K562 (cell line): ENCODE measurements at regions of chr3 and their contacts with region 1.

Region 1: GRCh38 chr3:45037734-45038455 is 11.8 kb downstream of the CLEC3B start:
- DNase-seq: peak; percentile 94 to 97 (median 95)
- ATAC-seq: peak; percentile 92
- H3K4me3 ChIP-seq: no peak overlapping the region
- H3K27ac ChIP-seq: no peak overlapping the region
- H3K4me1 ChIP-seq: peaks cover 9 to 19% of the 10 kb centered on the region in 2 experiments
- H3K27me3 ChIP-seq: peaks cover 3 to 14% of the 10 kb centered on the region in 2 experiments; a peak in 4 of 5 replicates
- CTCF ChIP-seq: peak; percentile 99
- EP300 ChIP-seq: no peak
- POLR2A ChIP-seq: no peak
- RAD21 ChIP-seq: peak; percentile 99 to 100

Region 2: DNA sequence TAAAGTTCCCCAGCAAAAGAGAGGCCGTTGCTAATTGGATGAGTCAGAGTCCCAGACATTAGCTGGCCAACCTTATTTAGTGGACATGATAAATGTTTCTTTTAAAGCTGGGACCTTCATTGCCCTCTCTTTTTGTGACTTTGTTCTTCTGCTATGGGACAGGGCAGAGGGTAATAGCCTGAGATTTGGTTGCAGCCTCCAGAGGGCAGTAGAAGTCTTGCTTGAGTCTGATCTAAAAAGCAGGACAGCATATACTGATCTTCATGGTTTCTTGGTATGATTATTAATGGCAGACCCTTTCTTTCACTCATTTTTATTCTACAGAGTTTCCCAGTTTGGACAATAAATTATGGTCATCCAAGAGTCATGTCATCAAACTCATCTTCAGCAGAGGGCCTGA is 508.0 kb before region 1 on chr3:
- CTCF ChIA-PET with region 1: no interaction called
- POLR2A ChIA-PET with region 1: interaction called, 3 read pairs
- in situ Hi-C with region 1: no loop called
- intact Hi-C with region 1: loop called (anchors 2 kb)
- DNase-seq: peak in 1 of 4 experiments; percentile 37
- ATAC-seq: peak; percentile 76
- H3K4me3 ChIP-seq: no peak overlapping the region
- H3K27ac ChIP-seq: no peak overlapping the region
- H3K4me1 ChIP-seq: peaks cover 0 to 3% of the 10 kb centered on the region in 2 experiments; a peak in 1 of 5 replicates
- H3K27me3 ChIP-seq: peaks cover 0 to 8% of the 10 kb centered on the region in 2 experiments; a peak in 2 of 5 replicates
- CTCF ChIP-seq: peak; percentile 33 to 48 (median 43); a peak in 4 of 6 replicates
- EP300 ChIP-seq: no peak
- POLR2A ChIP-seq: no peak
- RAD21 ChIP-seq: peak in 1 of 2 experiments; percentile 34; a peak in 2 of 4 replicates

Region 3: GRCh38 chr3:45210308-45211041 is 172.6 kb after region 1 on chr3:
- CTCF ChIA-PET with region 1: interaction called, 94 read pairs
- POLR2A ChIA-PET with region 1: interaction called, 24 read pairs
- in situ Hi-C with region 1: loop called (anchors 5 kb)
- intact Hi-C with region 1: loop called (anchors 1 kb)
- DNase-seq: peak; percentile 81 to 88 (median 84)
- ATAC-seq: peak; percentile 99
- H3K4me3 ChIP-seq: no peak overlapping the region
- H3K27ac ChIP-seq: no peak overlapping the region
- H3K4me1 ChIP-seq: peaks cover 4 to 11% of the 10 kb centered on the region in 2 experiments; a peak in 3 of 5 replicates
- H3K27me3 ChIP-seq: no peaks in the 10 kb centered on the region
- CTCF ChIP-seq: peak; percentile 96 to 97 (median 96)
- EP300 ChIP-seq: peak; percentile 26; the same call in 1 of the 2 replicates
- POLR2A ChIP-seq: no peak
- RAD21 ChIP-seq: peak; percentile 96 to 98

Region 4: GRCh38 chr3:45499529-45499928 is 461.6 kb after region 1 on chr3:
- CTCF ChIA-PET with region 1: interaction called, 53 read pairs
- POLR2A ChIA-PET with region 1: no interaction called
- in situ Hi-C with region 1: no loop called
- intact Hi-C with region 1: no loop called
- DNase-seq: peak in 1 of 4 experiments; percentile 20
- ATAC-seq: no peak
- H3K4me3 ChIP-seq: no peak overlapping the region
- H3K27ac ChIP-seq: no peak overlapping the region
- H3K4me1 ChIP-seq: no peaks in the 10 kb centered on the region
- H3K27me3 ChIP-seq: no peaks in the 10 kb centered on the region
- CTCF ChIP-seq: peak in 2 of 3 experiments; percentile 20 to 70; a peak in 4 of 6 replicates
- EP300 ChIP-seq: no peak
- POLR2A ChIP-seq: no peak
- RAD21 ChIP-seq: peak; percentile 66 to 67

Region 5: GRCh38 chr3:45929042-45929679 is 891.3 kb after region 1 on chr3:
- CTCF ChIA-PET with region 1: interaction called, 12 read pairs
- POLR2A ChIA-PET with region 1: no interaction called
- in situ Hi-C with region 1: loop called (anchors 10 kb)
- intact Hi-C with region 1: loop called (anchors 10 kb)
- DNase-seq: peak; percentile 70 to 85 (median 80)
- ATAC-seq: peak; percentile 99
- H3K4me3 ChIP-seq: no peak overlapping the region
- H3K27ac ChIP-seq: no peak overlapping the region
- H3K4me1 ChIP-seq: no peaks in the 10 kb centered on the region
- H3K27me3 ChIP-seq: no peaks in the 10 kb centered on the region
- CTCF ChIP-seq: peak; percentile 86 to 93 (median 91)
- EP300 ChIP-seq: no peak
- POLR2A ChIP-seq: no peak
- RAD21 ChIP-seq: peak; percentile 88 to 89

Region 6: DNA sequence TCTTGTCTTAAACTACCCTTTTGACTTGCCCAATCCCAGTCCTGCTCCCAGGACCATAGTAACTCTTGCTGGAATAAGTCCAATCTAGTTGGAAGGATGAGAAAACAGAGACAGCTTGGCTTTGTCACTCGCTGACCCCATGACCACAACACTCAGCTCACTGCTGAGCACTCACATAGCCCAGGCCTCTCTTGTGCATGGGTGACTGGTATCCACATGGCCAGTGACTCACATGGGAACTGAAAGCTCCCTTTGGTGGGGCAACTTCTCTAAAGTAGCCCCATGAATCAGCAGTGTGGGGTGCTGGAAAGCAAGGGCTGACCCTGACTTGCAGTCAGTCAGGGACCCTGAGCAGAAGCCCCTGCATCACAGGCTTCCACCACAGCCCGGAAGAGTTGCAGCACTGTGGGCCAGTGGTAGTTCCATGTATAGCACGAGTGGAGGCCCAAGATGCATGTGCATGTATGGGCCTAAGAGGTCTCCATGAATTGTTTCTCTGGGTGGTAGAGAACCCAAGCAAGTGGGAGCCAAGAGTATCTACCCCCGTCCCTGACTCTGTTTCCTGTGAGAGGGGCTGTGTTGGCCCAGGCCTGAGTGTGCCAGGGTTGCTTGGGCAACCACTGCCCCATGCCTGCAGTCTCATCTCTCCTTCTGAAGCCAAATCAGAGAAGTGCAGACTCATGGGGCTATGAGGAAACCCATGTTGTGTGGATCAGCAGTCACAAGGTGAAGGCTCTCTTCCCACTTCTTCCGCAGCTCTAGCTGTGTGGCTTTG is 1051.5 kb after region 1 on chr3:
- CTCF ChIA-PET with region 1: no interaction called
- POLR2A ChIA-PET with region 1: no interaction called
- in situ Hi-C with region 1: loop called (anchors 10 kb)
- intact Hi-C with region 1: no loop called
- DNase-seq: no peak
- ATAC-seq: no peak; the same call in 2 of the 3 replicates
- H3K4me3 ChIP-seq: no peak overlapping the region
- H3K27ac ChIP-seq: no peak overlapping the region
- H3K4me1 ChIP-seq: no peaks in the 10 kb centered on the region; a peak in 1 of 5 replicates
- H3K27me3 ChIP-seq: peaks cover 0 to 13% of the 10 kb centered on the region in 2 experiments; a peak in 3 of 5 replicates
- CTCF ChIP-seq: no peak
- EP300 ChIP-seq: no peak
- POLR2A ChIP-seq: no peak
- RAD21 ChIP-seq: no peak